A673 (cell line): ENCODE measurements at regions of chr2 and their contacts with region 1.

Region 1: GRCh38 chr2:175372704-175373701 is 191.5 kb upstream of the ATP5MC3 start:
- DNase-seq: peak; percentile 97
- H3K4me3 ChIP-seq: no peak overlapping the region
- H3K27ac ChIP-seq: peak overlapping the region; percentile 83
- H3K4me1 ChIP-seq: peaks cover 69% of the 10 kb centered on the region
- H3K27me3 ChIP-seq: no peaks in the 10 kb centered on the region
- CTCF ChIP-seq: no peak

Region 2: DNA sequence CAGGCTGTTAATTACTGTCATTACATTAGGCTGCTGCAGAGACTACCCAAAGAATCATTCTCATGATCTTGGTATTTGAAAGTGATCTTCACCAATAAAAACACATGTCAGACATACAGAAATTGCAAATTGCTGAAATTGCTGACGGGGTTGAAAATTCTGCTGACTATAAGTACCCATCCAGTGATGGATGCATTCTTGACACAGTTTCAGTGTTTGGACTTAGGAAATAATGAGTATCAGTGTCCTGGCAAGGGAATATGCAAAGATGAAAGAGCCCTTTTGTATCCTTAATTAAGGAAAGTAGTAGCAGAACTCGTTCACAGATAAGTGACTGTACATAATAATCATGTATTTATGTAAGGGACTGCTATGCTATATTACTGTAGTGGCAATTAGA is 29.6 kb after region 1 on chr2:
- CTCF ChIA-PET with region 1: interaction called, 6 read pairs
- POLR2A ChIA-PET with region 1: interaction called, 13 read pairs
- intact Hi-C with region 1: loop called (anchors 2 kb)
- DNase-seq: peak; percentile 81
- H3K4me3 ChIP-seq: no peak overlapping the region
- H3K27ac ChIP-seq: peak overlapping the region; percentile 96
- H3K4me1 ChIP-seq: peaks cover 41% of the 10 kb centered on the region
- H3K27me3 ChIP-seq: no peaks in the 10 kb centered on the region
- CTCF ChIP-seq: no peak

Region 3: GRCh38 chr2:175432021-175432420 is 59.0 kb after region 1 on chr2:
- CTCF ChIA-PET with region 1: interaction called, 3 read pairs
- POLR2A ChIA-PET with region 1: interaction called, 4 read pairs
- intact Hi-C with region 1: loop called (anchors 1 kb)
- DNase-seq: peak; percentile 94
- H3K4me3 ChIP-seq: peak overlapping the region; percentile 10
- H3K27ac ChIP-seq: peak overlapping the region; percentile 74
- H3K4me1 ChIP-seq: peaks cover 41% of the 10 kb centered on the region
- H3K27me3 ChIP-seq: no peaks in the 10 kb centered on the region
- CTCF ChIP-seq: no peak

Region 4: DNA sequence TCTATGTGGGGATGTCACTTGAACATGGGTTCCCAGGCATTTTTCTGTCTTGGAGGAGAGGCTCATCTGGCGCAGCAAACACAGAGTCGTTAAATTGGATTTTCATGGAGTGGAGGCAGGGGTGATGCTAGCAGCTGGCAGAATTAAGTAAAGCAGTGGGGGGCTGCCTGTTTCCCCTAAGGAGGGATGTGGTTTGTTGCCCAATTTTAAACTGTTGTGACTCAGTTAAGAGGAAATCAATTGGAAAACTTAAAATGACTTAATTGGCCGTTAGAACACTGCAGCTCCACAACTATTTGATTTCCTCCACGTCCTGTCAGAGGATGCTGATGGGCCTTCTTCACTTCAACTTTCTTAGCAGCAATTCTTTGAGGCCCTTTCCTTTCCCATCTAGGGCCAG is 162.6 kb after region 1 on chr2:
- CTCF ChIA-PET with region 1: no interaction called
- POLR2A ChIA-PET with region 1: no interaction called
- intact Hi-C with region 1: loop called (anchors 5 kb)
- DNase-seq: peak; percentile 90
- H3K4me3 ChIP-seq: no peak overlapping the region
- H3K27ac ChIP-seq: no peak overlapping the region
- H3K4me1 ChIP-seq: peaks cover 12% of the 10 kb centered on the region
- H3K27me3 ChIP-seq: no peaks in the 10 kb centered on the region
- CTCF ChIP-seq: no peak